CD4-positive, alpha-beta memory T cell (primary cell): ENCODE measurements at regions of chr11 and their contacts with region 1.

Region 1: GRCh38 chr11:13276832-13277767 is 490 bp upstream of the BMAL1 start:
- DNase-seq: peak; percentile 97 to 98 (median 98)
- H3K4me3 ChIP-seq: peak overlapping the region; percentile 83 to 95
- H3K4me3 Mint-ChIP-seq: peak overlapping the region; percentile 93 to 100 (median 98)
- H3K27ac ChIP-seq: peak overlapping the region; percentile 80
- H3K27ac Mint-ChIP-seq: peak overlapping the region; percentile 94 to 99 (median 96)
- H3K4me1 ChIP-seq: peaks cover 42% of the 10 kb centered on the region
- H3K4me1 Mint-ChIP-seq: peaks cover 33 to 52% (median 42%) of the 10 kb centered on the region in 4 donors
- H3K27me3 ChIP-seq: peaks cover 5% of the 10 kb centered on the region
- H3K27me3 Mint-ChIP-seq: peaks cover 0 to 2% of the 10 kb centered on the region in 2 donors

Region 2: GRCh38 chr11:13238879-13239514 is 38.1 kb before region 1 on chr11:
- CTCF ChIA-PET with region 1: interaction called, 4 read pairs
- POLR2A ChIA-PET with region 1: no interaction called
- intact Hi-C with region 1: loop called (anchors 2 kb)
- DNase-seq: peak; percentile 45 to 61 (median 54)
- H3K4me3 ChIP-seq: no peak overlapping the region
- H3K4me3 Mint-ChIP-seq: no peak overlapping the region
- H3K27ac ChIP-seq: no peak overlapping the region
- H3K27ac Mint-ChIP-seq: peak overlapping the region in 1 of 7 donors; percentile 63
- H3K4me1 ChIP-seq: no peaks in the 10 kb centered on the region
- H3K4me1 Mint-ChIP-seq: peaks cover 0 to 3% (median 1%) of the 10 kb centered on the region in 4 donors
- H3K27me3 ChIP-seq: peaks cover 8% of the 10 kb centered on the region
- H3K27me3 Mint-ChIP-seq: peaks cover 7 to 15% of the 10 kb centered on the region in 2 donors

Region 3: DNA sequence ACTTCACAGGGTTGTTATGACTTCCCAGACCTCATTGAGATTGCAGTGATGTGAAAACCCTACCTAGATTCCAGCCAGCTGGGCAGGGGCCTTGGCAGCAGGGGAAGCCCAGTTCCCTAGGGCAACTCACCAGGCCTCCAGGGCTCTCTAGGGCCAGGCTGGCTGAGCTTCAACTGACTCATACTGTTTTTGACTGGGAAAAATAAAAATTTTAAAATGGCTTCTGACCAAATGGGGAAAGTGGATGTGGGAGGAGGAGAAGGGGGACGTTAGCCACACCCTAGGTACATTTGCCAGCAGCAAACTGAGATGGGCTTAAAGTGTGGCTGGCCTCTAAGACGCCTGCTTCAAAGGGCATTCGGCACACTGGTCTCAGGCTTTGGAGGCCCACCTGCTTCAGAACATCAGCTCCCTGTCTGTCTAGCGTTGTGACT is 39.4 kb after region 1 on chr11:
- CTCF ChIA-PET with region 1: no interaction called
- POLR2A ChIA-PET with region 1: interaction called, 3 read pairs
- intact Hi-C with region 1: loop called (anchors 5 kb)
- DNase-seq: no peak
- H3K4me3 ChIP-seq: no peak overlapping the region
- H3K4me3 Mint-ChIP-seq: peak overlapping the region in 3 of 8 donors; percentile 6 to 67 (median 26)
- H3K27ac ChIP-seq: no peak overlapping the region
- H3K27ac Mint-ChIP-seq: peak overlapping the region in 6 of 7 donors; percentile 22 to 85 (median 65)
- H3K4me1 ChIP-seq: peaks cover 97% of the 10 kb centered on the region
- H3K4me1 Mint-ChIP-seq: peaks cover 40 to 94% (median 73%) of the 10 kb centered on the region in 4 donors
- H3K27me3 ChIP-seq: no peaks in the 10 kb centered on the region
- H3K27me3 Mint-ChIP-seq: no peaks in the 10 kb centered on the region

Region 4: DNA sequence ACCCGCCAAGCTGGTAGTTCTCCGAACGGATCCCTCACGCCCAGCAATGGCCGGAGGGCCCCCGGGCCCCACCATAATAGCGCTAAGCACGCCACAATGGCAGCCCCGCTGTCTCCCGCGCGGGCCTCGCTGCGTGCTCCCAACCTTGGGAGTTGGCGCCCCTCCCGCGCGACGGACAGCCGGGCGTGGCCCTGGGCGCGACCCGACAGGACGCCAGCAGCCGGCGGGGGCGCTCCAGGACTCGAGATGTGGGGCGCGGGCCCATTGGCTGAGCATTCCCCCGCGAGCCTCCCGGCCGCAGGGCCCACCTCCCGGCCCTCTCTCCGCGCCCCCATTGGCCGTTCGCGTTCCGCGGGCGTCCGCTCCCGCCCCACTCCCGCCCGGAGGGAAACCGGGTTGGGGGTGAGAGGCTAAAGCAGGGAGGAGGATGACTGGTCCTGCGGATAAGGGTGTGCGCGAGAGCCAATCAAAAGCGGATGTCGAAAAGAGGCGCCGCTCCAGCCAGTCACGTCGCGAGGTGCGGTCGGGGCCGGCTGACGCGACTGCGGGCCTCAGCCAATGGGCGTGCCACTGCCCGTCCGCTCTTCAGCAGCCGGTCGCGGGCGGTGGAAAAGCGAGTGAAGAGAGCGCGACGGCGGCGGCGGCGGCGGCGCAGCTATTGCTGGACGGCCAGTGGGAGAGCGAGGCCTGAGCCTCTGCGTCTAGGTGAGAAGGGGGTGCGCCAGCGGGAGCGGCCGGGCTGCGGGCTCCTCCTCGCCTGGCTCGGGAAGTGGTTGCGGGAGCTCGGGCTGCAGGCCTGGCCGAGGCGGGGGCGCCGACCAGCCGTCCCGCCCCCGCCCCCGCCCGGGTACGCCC is 391.2 kb after region 1 on chr11 and contains the start of gene FAR1:
- CTCF ChIA-PET with region 1: no interaction called
- POLR2A ChIA-PET with region 1: no interaction called
- intact Hi-C with region 1: loop called (anchors 1 kb)
- DNase-seq: peak; percentile 96 to 98 (median 97)
- H3K4me3 ChIP-seq: peak within 1 kb of the TSS; percentile 73 to 84
- H3K4me3 Mint-ChIP-seq: peak within 1 kb of the TSS; percentile 93 to 99 (median 96)
- H3K27ac ChIP-seq: peak within 1 kb of the TSS; percentile 65
- H3K27ac Mint-ChIP-seq: peak within 1 kb of the TSS; percentile 95 to 97 (median 96)
- H3K4me1 ChIP-seq: peaks cover 44% of the 10 kb centered on the region
- H3K4me1 Mint-ChIP-seq: peaks cover 35 to 50% (median 41%) of the 10 kb centered on the region in 4 donors
- H3K27me3 ChIP-seq: no peaks in the 10 kb centered on the region
- H3K27me3 Mint-ChIP-seq: peaks cover 4% of the 10 kb centered on the region in 2 donors
- total RNA-seq, gene FAR1: 34.5 to 39.7 TPM